Activated naive CD8-positive, alpha-beta T cell treated with anti-CD3 and anti-CD28 coated beads, Interleukin-2, amount 10 ng/mL, durations not matched to agents 7 days and 5 days (primary cell): ENCODE measurements at regions of chr19 and their contacts with region 1.

Region 1: DNA sequence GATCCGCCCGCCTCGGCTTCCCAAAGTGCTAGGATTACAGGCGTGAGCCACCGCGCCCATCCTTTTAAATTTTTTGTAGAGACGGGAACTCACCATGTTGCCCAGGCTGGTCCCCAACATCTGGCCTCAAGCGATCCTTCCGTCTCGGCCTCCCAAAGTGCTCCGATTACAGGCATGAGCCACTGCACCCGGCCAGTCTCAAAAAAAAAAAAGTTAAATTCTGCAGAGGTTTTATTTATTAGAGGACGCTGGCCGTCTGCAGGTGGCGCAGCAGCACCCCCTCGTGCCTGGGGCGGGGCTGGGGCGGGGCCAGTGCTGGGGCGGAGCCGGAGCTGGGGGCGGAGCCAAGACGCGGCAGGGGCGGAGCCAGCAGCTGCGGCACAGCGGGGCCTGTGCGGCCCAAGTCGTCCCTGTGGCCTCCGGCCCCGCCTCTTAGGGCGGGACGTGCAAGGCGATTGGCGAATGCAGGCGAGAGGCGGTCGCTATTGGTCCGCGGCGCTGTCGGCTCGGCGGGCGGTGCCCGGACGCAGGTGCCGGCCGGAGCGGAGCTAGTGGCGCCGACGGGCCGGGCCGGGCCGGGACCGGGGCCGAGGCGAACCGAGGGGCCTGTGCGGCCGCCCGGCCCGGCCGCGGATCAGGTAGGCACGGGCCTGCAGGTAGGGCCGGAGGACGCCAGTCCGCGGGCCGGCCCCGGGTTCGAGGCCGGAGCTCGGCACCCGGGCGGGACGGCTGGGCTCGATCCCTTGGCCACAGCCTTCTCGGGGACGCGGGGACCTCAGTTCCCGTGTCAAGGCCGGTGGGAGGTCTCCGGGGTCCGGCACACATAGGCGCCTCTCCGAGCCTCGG is at the start of gene MARCHF2:
- DNase-seq: peak; percentile 96
- ATAC-seq: peak; percentile 100
- H3K4me3 Mint-ChIP-seq: peak within 1 kb of the TSS; percentile 77
- H3K27ac Mint-ChIP-seq: peak within 1 kb of the TSS; percentile 4
- H3K4me1 Mint-ChIP-seq: peaks cover 6% of the 10 kb centered on the region
- H3K27me3 Mint-ChIP-seq: no peaks in the 10 kb centered on the region
- total RNA-seq, gene MARCHF2: 23.9 to 25.0 TPM

Region 2: GRCh38 chr19:8324186-8325050 is 88.6 kb before region 1 on chr19:
- POLR2A ChIA-PET with region 1: no interaction called
- DNase-seq: no peak
- ATAC-seq: no peak
- H3K4me3 Mint-ChIP-seq: no peak overlapping the region
- H3K27ac Mint-ChIP-seq: no peak overlapping the region
- H3K4me1 Mint-ChIP-seq: peaks cover 23% of the 10 kb centered on the region
- H3K27me3 Mint-ChIP-seq: no peaks in the 10 kb centered on the region

Region 3: DNA sequence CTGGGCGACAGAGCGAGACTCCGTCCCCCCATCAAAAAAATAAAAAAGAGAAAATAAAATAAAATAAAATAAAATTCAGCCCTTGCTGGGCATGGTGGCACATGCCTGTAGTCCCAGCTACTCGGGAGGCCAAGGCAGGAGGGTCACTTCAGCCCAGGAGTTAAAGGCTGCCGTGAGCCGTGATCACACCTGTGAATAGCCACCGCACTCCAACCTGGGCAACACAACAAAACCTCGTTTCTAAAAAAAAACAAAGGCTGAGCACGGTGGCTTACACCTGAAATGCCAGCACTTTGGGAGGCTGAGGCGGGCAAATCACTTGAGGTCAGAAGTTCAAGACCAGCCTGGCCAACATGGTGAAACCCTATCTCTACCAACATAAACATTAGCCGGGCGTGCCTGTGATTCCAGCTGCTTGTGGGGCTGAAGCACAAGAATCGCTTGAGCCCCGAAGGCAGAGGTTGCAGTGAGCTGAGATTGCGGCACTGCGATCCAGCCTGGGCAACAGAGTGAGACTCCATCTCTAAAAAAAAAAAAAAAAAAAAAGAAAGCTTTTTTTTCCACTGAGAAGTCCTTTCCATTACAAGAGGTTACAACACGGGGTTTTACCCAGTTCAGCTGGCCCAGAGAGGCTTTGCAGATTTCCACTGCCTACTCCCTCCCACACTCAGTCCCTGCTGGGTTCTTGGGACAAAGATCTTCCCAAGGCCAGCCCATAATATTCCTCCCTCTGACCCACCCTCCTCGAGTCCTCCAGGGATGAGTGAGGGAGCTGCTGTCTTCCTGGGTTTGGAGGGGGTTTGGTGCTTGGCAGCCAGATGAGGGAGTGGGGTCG is 42.6 kb before region 1 on chr19:
- POLR2A ChIA-PET with region 1: no interaction called
- DNase-seq: no peak
- ATAC-seq: no peak
- H3K4me3 Mint-ChIP-seq: no peak overlapping the region
- H3K27ac Mint-ChIP-seq: no peak overlapping the region
- H3K4me1 Mint-ChIP-seq: peaks cover 3% of the 10 kb centered on the region
- H3K27me3 Mint-ChIP-seq: peaks cover 26% of the 10 kb centered on the region

Region 4: GRCh38 chr19:8399681-8400188 is 13.3 kb before region 1 on chr19:
- POLR2A ChIA-PET with region 1: no interaction called
- DNase-seq: no peak
- ATAC-seq: no peak
- H3K4me3 Mint-ChIP-seq: no peak overlapping the region
- H3K27ac Mint-ChIP-seq: no peak overlapping the region
- H3K4me1 Mint-ChIP-seq: peaks cover 13% of the 10 kb centered on the region
- H3K27me3 Mint-ChIP-seq: no peaks in the 10 kb centered on the region

Region 5: DNA sequence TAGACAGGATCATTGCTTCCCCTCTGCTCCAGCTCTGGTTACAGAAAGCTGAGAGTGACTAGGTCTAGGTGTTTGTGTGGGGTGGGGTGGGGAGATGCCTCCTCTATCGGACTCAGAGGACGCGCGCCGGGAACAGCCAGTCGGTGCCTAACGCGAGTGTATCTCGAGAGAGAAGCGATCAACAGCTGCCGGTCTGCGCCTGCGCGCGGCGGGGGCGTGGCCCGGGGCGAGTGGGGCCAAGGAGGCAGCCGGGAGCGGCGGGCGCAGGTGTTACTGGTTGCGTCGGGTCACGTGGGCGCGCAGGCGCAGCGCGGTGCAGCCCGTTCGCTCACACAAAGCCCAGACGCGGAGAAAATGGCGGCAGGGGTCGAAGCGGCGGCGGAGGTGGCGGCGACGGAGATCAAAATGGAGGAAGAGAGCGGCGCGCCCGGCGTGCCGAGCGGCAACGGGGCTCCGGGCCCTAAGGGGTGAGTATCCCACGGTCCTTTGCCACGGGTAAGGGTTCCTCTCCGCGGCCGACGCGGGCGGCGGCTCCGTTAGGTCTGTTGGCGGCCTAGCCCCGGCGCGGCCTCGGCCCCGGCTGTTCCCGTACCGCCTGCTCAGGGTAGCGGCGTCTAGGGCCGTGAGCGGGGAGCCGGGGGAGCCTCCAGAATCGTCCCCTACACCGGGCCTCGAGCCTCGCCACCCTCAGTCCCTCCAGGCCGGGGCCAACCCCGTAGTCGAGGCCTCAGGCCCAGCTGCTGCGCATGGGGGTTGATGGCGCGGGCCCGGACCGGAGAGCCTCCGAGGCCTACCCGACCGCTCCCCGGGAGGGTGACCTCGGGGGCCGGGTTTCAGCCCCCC is 31.9 kb after region 1 on chr19 and contains the start of gene HNRNPM:
- POLR2A ChIA-PET with region 1: interaction called, 25 read pairs
- DNase-seq: peak; percentile 100
- ATAC-seq: peak; percentile 96
- H3K4me3 Mint-ChIP-seq: peak within 1 kb of the TSS; percentile 100
- H3K27ac Mint-ChIP-seq: peak within 1 kb of the TSS; percentile 99
- H3K4me1 Mint-ChIP-seq: peaks cover 33% of the 10 kb centered on the region
- H3K27me3 Mint-ChIP-seq: peaks cover 4% of the 10 kb centered on the region
- total RNA-seq, gene HNRNPM: 188 to 198 TPM

Region 6: DNA sequence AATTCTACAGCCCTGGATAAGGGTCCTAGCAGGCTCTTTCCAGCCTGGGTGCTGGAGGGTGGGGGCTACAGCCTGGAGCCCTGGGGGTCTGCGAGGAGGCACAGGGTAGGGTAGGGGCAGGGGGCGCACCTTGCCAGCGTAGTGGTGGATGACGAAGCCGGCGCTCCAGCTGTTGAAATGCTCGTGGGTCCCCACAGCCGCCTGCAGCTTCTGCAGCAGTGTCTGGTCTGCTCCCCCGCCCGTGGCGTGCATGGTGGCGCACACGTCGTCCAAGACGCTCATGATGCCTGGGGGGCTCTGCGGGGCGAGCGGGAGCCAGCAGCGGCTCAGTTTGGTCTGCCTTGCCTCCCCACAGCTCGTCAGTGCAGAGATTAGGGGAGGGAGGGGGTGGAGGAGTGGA is 131.2 kb after region 1 on chr19:
- POLR2A ChIA-PET with region 1: no interaction called
- DNase-seq: no peak
- ATAC-seq: no peak
- H3K4me3 Mint-ChIP-seq: no peak overlapping the region
- H3K27ac Mint-ChIP-seq: no peak overlapping the region
- H3K4me1 Mint-ChIP-seq: no peaks in the 10 kb centered on the region
- H3K27me3 Mint-ChIP-seq: no peaks in the 10 kb centered on the region